GM12878 (cell line): ENCODE measurements at regions of chr17 and their contacts with region 1.

Region 1: DNA sequence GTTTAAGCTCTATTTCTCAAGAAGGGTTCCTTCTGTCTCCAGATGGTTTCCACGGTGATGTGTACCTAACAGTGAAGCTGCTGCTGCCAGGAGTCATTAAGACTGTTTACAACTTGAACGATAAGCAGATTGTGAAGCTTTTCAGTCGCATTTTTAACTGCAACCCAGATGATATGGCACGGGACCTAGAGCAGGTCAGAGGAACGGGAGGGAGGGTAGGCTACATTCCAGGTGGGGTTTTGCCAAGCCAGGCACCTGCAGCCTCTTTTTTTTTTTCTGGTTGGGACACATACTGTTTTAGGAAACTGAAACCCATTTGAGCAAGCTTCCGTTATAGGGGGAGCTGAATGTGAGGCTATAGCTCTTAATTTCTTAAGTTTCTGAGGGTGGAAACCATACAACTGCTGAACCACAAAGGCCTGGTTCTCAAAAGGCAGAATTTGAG is 10.6 kb downstream of the LIG3 start:
- DNase-seq: no peak
- ATAC-seq: no peak
- H3K4me3 ChIP-seq: no peak overlapping the region
- H3K27ac ChIP-seq: no peak overlapping the region
- H3K4me1 ChIP-seq: peaks cover 3% of the 10 kb centered on the region; the same call in 1 of the 2 replicates
- H3K27me3 ChIP-seq: no peaks in the 10 kb centered on the region
- CTCF ChIP-seq: no peak
- EP300 ChIP-seq: no peak
- POLR2A ChIP-seq: no peak
- RAD21 ChIP-seq: no peak

Region 2: DNA sequence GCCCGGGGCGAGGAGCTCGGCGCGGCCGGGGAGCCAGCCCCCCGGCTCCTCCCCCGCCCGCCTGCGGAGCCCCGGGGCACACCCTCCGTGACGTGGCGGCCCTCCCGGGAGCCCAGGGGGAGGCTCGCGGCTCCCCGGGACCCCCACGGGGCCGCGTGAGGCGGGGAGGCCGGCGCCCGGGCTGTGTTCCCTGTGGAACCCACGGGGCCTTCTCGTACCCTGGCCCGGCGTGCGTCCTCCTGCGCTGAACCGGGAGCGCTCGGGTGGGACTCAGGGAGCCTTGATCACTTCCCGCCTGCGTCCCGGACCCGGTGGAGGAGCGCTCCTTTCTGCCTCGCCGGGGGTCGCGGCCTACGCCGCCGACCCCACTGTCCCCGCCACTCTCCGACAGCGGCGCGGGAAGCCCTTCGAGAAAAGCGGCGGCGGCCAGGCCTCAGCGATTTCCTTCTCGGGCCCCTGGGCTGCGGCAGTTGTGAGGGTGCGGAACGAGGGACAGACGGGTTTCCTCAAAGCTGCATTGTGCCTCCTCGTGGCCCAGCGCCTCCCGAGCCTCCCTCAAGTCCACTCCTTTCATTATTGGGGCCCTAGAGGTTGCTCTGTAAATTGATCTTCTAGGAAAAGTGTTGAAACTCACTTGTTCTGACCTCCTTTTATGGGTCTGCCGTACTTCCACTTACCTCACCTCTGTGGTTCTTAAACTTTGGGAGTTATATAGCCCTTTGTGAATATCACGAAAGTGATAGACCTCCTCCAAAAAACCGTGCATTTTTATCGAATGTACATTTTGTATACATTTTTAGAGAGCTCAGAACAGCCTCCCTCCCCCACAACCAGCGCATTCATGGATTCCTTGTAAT is 10.0 kb before region 1 on chr17:
- CTCF ChIA-PET with region 1: interaction called, 11 read pairs
- POLR2A ChIA-PET with region 1: interaction called, 4 read pairs
- RAD21 ChIA-PET with region 1: interaction called, 3 read pairs
- SMC1A ChIA-PET with region 1: interaction called, 13 read pairs
- in situ Hi-C with region 1: no loop called
- intact Hi-C with region 1: no loop called
- DNase-seq: peak; percentile 27
- ATAC-seq: peak; percentile 89
- H3K4me3 ChIP-seq: peak overlapping the region; percentile 89
- H3K27ac ChIP-seq: peak overlapping the region; percentile 85
- H3K4me1 ChIP-seq: peaks cover 12% of the 10 kb centered on the region
- H3K27me3 ChIP-seq: no peaks in the 10 kb centered on the region
- CTCF ChIP-seq: peak; percentile 18 to 34 (median 26); a peak in 2 of 6 replicates
- EP300 ChIP-seq: no peak
- POLR2A ChIP-seq: peak; percentile 77
- RAD21 ChIP-seq: 0 out of 2 replicates have a peak, but pooled peaks have one; percentile 19

Region 3: GRCh38 chr17:35041390-35041789 is 50.4 kb after region 1 on chr17:
- CTCF ChIA-PET with region 1: no interaction called
- POLR2A ChIA-PET with region 1: no interaction called
- RAD21 ChIA-PET with region 1: no interaction called
- SMC1A ChIA-PET with region 1: no interaction called
- in situ Hi-C with region 1: no loop called
- intact Hi-C with region 1: no loop called
- DNase-seq: no peak
- ATAC-seq: peak; percentile 50
- H3K4me3 ChIP-seq: no peak overlapping the region
- H3K27ac ChIP-seq: no peak overlapping the region
- H3K4me1 ChIP-seq: peaks cover 20% of the 10 kb centered on the region
- H3K27me3 ChIP-seq: no peaks in the 10 kb centered on the region
- CTCF ChIP-seq: no peak
- EP300 ChIP-seq: no peak; a peak in 1 of 4 replicates
- POLR2A ChIP-seq: no peak
- RAD21 ChIP-seq: no peak